PC-9 (cell line): ENCODE measurements at regions of chr5 and their contacts with region 1.

Region 1: DNA sequence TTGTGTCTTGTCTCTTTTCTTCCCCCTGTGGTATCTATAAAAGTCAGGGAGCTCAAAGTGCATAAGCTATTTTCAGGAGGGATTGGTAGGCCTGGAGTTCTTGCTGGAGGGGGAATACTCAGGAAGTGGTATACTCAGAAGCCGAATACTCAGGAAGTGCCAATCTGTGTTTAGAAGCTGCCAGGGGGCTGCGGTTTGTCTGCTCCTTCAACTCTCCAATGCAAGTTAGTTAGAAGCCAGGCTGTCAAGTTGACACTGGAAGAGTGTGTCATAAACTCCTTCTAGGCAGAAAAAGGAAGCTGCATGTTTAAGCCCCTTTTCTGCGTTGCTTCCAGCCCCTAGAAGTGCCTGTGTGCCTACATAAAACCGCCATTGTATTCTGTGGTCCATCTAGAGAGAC is 366.5 kb downstream of the TAF11L14 start:
- DNase-seq: no peak
- H3K4me3 ChIP-seq: no peak overlapping the region
- H3K27ac ChIP-seq: no peak overlapping the region
- H3K4me1 ChIP-seq: peaks cover 11% of the 10 kb centered on the region; the same call in 1 of the 2 replicates
- H3K27me3 ChIP-seq: no peaks in the 10 kb centered on the region
- CTCF ChIP-seq: no peak

Region 2: GRCh38 chr5:17976404-17976803 is 24.3 kb before region 1 on chr5:
- CTCF ChIA-PET with region 1: no interaction called
- POLR2A ChIA-PET with region 1: no interaction called
- intact Hi-C with region 1: loop called (anchors 1 kb)
- DNase-seq: no peak
- H3K4me3 ChIP-seq: no peak overlapping the region
- H3K27ac ChIP-seq: no peak overlapping the region
- H3K4me1 ChIP-seq: no peaks in the 10 kb centered on the region
- H3K27me3 ChIP-seq: no peaks in the 10 kb centered on the region
- CTCF ChIP-seq: no peak

Region 3: GRCh38 chr5:18032744-18033143 is 32.0 kb after region 1 on chr5:
- CTCF ChIA-PET with region 1: interaction called, 13 read pairs
- POLR2A ChIA-PET with region 1: interaction called, 10 read pairs
- intact Hi-C with region 1: no loop called
- DNase-seq: no peak
- H3K4me3 ChIP-seq: no peak overlapping the region
- H3K27ac ChIP-seq: no peak overlapping the region
- H3K4me1 ChIP-seq: no peaks in the 10 kb centered on the region
- H3K27me3 ChIP-seq: no peaks in the 10 kb centered on the region; the same call in 1 of the 2 replicates
- CTCF ChIP-seq: no peak